Activated CD4-positive, alpha-beta T cell treated with anti-CD3 and anti-CD28 coated beads for 36 hours (primary cell): ENCODE measurements at regions of chr2 and their contacts with region 1.

Region 1: GRCh38 chr2:24971536-24972314 is at the start of gene DNAJC27:
- DNase-seq: peak; percentile 99
- ATAC-seq: peak; percentile 91
- H3K4me3 Mint-ChIP-seq: peak within 1 kb of the TSS; percentile 86
- H3K27ac Mint-ChIP-seq: peak within 1 kb of the TSS; percentile 99
- H3K4me1 Mint-ChIP-seq: peaks cover 17% of the 10 kb centered on the region
- H3K27me3 Mint-ChIP-seq: no peaks in the 10 kb centered on the region
- total RNA-seq, gene DNAJC27: 5.9 to 6.6 TPM

Region 2: DNA sequence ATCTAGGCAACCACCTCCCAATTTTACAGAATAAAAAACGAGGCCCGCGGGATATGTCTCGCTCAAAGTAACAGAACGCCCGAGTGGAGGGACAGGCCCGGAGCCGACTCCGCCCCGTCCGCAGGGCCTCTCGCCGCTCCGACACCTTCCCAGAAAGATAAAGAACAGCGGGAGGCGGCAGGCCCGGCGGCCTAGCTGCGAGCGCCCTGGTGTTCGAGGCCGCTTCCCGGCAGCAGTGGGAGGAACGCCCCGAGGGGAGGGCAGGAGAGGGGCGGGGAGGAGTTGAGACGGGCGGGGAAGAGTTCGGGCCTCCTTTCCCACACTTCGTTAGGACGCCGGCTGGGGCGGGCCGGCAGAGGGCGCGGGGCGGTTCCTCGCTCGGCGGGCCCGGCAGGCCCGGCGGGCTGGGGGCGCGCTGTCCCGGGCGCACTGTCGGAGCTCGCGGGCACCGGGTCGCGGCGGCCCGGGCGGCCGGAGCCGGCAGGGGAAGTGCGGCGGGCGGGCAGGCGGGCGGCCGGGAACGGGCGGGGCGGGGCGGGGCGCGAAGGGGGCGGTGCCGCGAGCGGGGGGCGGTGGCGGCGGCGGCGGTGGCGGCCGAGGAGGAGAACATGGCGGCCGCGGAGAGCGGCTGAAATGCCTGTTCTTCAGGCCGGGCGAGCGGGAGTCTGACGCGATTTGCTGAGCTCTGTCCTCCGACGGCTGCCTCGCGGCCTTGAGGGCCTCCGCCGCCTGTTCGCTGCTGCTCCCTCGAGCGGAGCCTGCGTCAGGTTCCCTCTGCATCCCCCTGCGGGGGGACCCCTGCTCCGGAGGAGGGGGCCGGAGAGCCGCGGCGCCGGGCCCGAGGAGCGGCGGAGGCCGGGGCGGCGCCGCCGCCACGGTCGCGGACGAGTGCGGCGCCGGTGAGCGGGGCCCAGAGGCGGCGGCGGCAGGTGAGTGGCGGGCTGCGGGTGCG is 480.8 kb before region 1 on chr2 and contains the start of gene NCOA1:
- CTCF ChIA-PET with region 1: no interaction called
- POLR2A ChIA-PET with region 1: interaction called, 4 read pairs
- intact Hi-C with region 1: loop called in 1 of 2 experiments (anchors 1 kb)
- DNase-seq: peak; percentile 96
- ATAC-seq: peak; percentile 89
- H3K4me3 Mint-ChIP-seq: peak within 1 kb of the TSS; percentile 85
- H3K27ac Mint-ChIP-seq: peak within 1 kb of the TSS; percentile 95
- H3K4me1 Mint-ChIP-seq: peaks cover 46% of the 10 kb centered on the region
- H3K27me3 Mint-ChIP-seq: no peaks in the 10 kb centered on the region
- total RNA-seq, gene NCOA1: 20.6 to 29.3 TPM

Region 3: DNA sequence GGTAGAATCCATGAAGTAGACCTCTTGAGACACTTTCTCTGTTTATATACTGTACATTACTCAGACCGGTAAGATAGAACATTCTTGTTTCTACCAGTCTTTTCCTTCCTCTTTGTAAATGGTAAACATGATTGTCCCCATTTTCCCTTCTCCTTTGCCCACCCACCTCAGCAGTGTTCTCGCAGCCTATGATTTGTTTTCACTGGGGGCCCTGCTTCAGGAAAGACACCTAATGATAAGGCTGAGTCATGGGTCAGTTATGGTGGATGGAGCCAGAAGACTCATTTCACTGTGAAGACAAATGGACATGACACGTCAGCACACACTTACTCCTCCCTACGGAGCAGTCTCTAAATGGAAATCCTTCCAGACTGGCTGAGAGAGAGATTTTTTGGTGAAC is 154.8 kb before region 1 on chr2:
- CTCF ChIA-PET with region 1: no interaction called
- POLR2A ChIA-PET with region 1: no interaction called
- intact Hi-C with region 1: no loop called
- DNase-seq: no peak
- ATAC-seq: no peak
- H3K4me3 Mint-ChIP-seq: no peak overlapping the region
- H3K27ac Mint-ChIP-seq: no peak overlapping the region
- H3K4me1 Mint-ChIP-seq: no peaks in the 10 kb centered on the region
- H3K27me3 Mint-ChIP-seq: no peaks in the 10 kb centered on the region

Region 4: GRCh38 chr2:24984912-24985311 is 13.2 kb after region 1 on chr2:
- CTCF ChIA-PET with region 1: interaction called, 15 read pairs
- POLR2A ChIA-PET with region 1: no interaction called
- intact Hi-C with region 1: no loop called
- DNase-seq: no peak
- ATAC-seq: no peak
- H3K4me3 Mint-ChIP-seq: no peak overlapping the region
- H3K27ac Mint-ChIP-seq: no peak overlapping the region
- H3K4me1 Mint-ChIP-seq: no peaks in the 10 kb centered on the region
- H3K27me3 Mint-ChIP-seq: peaks cover 2% of the 10 kb centered on the region

Region 5: DNA sequence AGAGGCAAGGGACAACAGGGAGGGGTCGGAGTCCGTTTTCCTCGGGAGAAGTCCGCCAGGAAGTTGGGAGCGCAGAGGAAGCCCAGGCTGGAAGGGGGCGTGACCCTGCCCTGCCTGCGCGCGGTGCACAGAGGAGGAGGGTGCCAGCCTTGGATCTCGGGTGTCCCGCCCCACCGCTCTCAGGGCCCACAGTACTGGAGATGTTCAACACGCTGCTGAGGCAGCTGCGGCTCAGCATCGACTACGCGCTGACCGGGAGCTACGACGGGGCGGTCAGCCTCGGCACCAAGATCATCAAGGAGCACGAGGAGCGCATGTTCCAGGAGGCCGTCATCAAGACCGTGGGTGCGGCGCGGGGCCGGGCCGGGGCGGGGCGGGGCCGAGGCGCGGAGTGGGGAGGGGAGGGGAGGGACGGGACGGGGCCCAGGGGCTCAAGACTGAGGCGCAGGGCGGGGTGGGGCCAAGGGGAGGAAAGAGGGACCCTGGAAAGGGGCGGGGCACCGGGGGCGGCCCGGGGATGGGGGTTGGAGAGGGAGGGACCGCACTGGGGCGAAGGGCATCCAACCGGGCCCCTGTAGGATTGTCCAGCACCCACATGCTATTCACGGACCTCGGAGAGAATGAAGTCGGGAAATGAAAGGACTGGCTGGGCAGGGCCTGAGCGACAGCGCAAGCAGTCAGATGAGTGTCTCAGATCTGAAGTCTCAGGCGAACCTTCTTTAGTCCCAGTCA is 160.0 kb after region 1 on chr2:
- CTCF ChIA-PET with region 1: interaction called, 141 read pairs
- POLR2A ChIA-PET with region 1: interaction called, 12 read pairs
- intact Hi-C with region 1: loop called (anchors 1 kb)
- DNase-seq: peak; percentile 39
- ATAC-seq: peak; percentile 47
- H3K4me3 Mint-ChIP-seq: peak overlapping the region; percentile 38
- H3K27ac Mint-ChIP-seq: no peak overlapping the region
- H3K4me1 Mint-ChIP-seq: peaks cover 11% of the 10 kb centered on the region
- H3K27me3 Mint-ChIP-seq: peaks cover 47% of the 10 kb centered on the region

Region 6: GRCh38 chr2:25314514-25315315 is 343.0 kb after region 1 on chr2:
- CTCF ChIA-PET with region 1: interaction called, 3 read pairs
- POLR2A ChIA-PET with region 1: no interaction called
- intact Hi-C with region 1: loop called in 1 of 2 experiments (anchors 1 kb)
- DNase-seq: peak; percentile 97
- ATAC-seq: peak; percentile 88
- H3K4me3 Mint-ChIP-seq: peak overlapping the region; percentile 83
- H3K27ac Mint-ChIP-seq: peak overlapping the region; percentile 95
- H3K4me1 Mint-ChIP-seq: peaks cover 58% of the 10 kb centered on the region
- H3K27me3 Mint-ChIP-seq: no peaks in the 10 kb centered on the region

Region 7: GRCh38 chr2:26244309-26245121 is 1272.8 kb after region 1 on chr2 and contains the starts of genes HADHA and HADHB:
- CTCF ChIA-PET with region 1: no interaction called
- POLR2A ChIA-PET with region 1: no interaction called
- intact Hi-C with region 1: loop called in 1 of 2 experiments (anchors 5 kb)
- DNase-seq: peak; percentile 90
- ATAC-seq: peak; percentile 80
- H3K4me3 Mint-ChIP-seq: peak within 1 kb of the TSS; percentile 99
- H3K27ac Mint-ChIP-seq: peak within 1 kb of the TSS; percentile 98
- H3K4me1 Mint-ChIP-seq: peaks cover 47% of the 10 kb centered on the region
- H3K27me3 Mint-ChIP-seq: no peaks in the 10 kb centered on the region
- total RNA-seq, gene HADHA: 149 to 154 TPM
- total RNA-seq, gene HADHB: 71.4 to 73.4 TPM